Right ventricle myocardium inferior (tissue), 1 donor: ENCODE measurements at regions of chr6 and their contacts with region 1.

Region 1: DNA sequence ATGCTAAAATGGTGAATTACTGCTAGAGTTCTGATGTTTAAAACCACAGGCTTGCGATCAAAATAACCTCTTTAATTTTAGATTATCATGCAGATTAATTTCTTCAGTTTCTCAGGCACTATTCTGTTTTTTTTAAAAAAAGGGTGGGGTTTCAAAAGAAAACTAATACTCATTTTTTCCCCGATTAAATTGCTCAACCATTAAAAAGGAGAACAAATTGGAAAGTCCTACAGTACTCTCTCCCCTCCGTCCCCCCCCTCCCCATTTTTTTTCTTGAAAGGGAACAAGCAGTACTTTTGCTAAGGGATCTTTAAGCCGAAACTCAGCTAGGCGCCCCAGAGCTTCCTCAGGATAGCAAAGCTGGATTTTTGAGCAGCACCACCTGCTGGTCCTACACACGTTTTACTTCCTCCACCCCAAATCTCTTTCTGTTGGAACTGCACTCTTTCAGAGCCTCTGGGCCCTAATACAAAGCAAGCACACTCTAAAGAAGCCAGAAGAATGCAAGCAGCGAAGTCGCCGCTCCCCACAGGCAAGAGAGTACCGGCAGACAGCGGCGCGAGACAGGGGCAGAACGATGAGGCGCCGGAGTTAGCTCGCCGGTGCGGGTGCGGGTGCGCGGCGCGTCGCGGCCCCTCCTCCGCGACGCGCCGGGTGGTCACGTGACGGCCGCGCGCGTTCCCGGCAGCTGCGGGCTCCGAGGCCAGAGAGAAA is at the start of gene RNF146:
- DNase-seq: peak; percentile 92
- ATAC-seq: peak; percentile 96
- total RNA-seq, gene RNF146: 41.0 TPM

Region 2: GRCh38 chr6:127186889-127187288 is 79.4 kb before region 1 on chr6:
- intact Hi-C with region 1: loop called (anchors 5 kb)
- DNase-seq: peak; percentile 92
- ATAC-seq: no peak

Region 3: DNA sequence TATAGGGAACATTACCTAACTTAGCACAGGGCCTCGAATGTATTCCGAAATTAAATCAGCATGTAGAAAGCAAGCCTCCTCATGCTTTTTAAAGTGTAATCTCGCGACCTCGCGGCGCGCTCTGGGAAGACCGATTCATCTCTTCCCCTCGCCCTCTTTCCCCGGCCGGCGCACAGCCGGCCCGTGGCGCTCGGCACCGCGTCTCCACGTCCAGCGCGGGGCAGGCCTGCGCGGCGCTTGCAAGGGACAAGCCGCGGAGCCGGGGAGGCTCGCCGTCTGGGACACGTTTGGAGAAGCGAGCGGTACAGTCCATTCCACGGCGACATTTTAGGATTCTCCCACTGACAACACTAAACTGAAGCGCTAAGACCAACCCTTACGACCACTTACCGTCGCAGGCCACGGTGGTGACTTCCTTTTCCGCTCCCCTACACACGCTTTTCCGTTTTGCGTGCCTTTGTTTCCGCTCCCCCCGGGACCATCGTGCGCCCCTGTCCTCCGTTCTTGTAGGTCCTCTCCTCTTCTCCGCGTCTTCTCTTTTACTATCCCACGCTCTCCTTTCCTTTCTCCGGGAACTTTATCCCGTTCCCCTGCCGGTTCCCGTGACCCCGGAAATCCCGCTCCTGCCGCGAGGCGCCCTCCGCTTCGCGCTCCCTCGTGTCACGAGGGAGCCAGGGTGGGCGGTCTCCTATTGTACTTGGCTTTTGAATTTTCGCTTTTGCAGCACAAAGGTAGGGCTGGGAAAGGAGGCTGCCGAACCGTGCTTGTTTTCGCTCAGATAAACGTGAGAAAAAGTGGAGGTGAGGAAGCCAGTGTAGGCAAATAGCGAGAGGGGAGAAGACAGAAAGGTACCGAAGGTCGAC is 76.8 kb after region 1 on chr6 and contains the start of gene ECHDC1:
- intact Hi-C with region 1: loop called (anchors 2 kb)
- DNase-seq: peak; percentile 86
- ATAC-seq: peak; percentile 86
- total RNA-seq, gene ECHDC1: 42.7 TPM